MCF 10A (cell line): ENCODE measurements at regions of chr15 and their contacts with region 1.

Region 1: GRCh38 chr15:85504749-85505676 is 124.6 kb downstream of the AKAP13 start:
- DNase-seq: peak; percentile 73
- H3K4me3 Mint-ChIP-seq: no peak overlapping the region
- H3K27ac Mint-ChIP-seq: peak overlapping the region; percentile 61
- H3K4me1 Mint-ChIP-seq: peaks cover 26% of the 10 kb centered on the region
- H3K27me3 Mint-ChIP-seq: no peaks in the 10 kb centered on the region
- CTCF ChIP-seq: peak; percentile 45

Region 2: GRCh38 chr15:85312486-85312885 is 192.5 kb before region 1 on chr15:
- CTCF ChIA-PET with region 1: interaction called, 11 read pairs
- POLR2A ChIA-PET with region 1: no interaction called
- intact Hi-C with region 1: no loop called
- DNase-seq: no peak
- H3K4me3 Mint-ChIP-seq: no peak overlapping the region
- H3K27ac Mint-ChIP-seq: no peak overlapping the region
- H3K4me1 Mint-ChIP-seq: peaks cover 13% of the 10 kb centered on the region
- H3K27me3 Mint-ChIP-seq: no peaks in the 10 kb centered on the region
- CTCF ChIP-seq: no peak

Region 3: DNA sequence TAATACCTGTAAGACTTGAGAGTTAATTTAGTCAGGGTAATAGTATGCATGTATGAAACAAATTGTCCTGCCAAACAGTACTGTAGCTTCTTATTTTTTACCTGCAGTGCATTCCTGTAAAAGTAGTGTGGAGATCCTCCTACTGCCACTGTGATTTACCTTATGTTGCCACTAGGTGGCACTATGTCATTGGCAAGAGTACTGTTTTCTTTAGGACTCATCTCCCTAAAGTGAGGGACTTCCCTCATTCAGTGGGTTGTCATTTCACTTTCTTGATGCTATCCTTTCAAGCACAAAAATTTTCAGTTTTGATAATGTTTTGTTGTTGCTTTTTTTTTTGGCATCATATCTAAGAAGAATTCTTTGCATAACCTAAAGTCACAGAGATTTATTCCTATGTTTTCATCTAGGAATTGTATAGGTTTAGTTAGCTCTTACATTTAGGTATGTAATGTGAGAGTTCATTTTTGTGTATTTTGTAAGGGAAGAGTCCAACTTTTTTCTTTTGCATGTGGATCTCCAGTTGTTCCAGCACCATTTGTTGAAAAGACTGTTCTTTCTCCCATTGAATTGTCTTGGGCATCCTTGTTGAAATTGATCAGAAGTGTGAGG is 19.0 kb before region 1 on chr15:
- CTCF ChIA-PET with region 1: interaction called, 64 read pairs
- POLR2A ChIA-PET with region 1: interaction called, 3 read pairs
- intact Hi-C with region 1: no loop called
- DNase-seq: peak; percentile 83
- H3K4me3 Mint-ChIP-seq: no peak overlapping the region
- H3K27ac Mint-ChIP-seq: no peak overlapping the region
- H3K4me1 Mint-ChIP-seq: peaks cover 37% of the 10 kb centered on the region
- H3K27me3 Mint-ChIP-seq: no peaks in the 10 kb centered on the region
- CTCF ChIP-seq: peak; percentile 62

Region 4: GRCh38 chr15:85527895-85528294 is 22.9 kb after region 1 on chr15:
- CTCF ChIA-PET with region 1: interaction called, 11 read pairs
- POLR2A ChIA-PET with region 1: interaction called, 3 read pairs
- intact Hi-C with region 1: no loop called
- DNase-seq: no peak
- H3K4me3 Mint-ChIP-seq: no peak overlapping the region
- H3K27ac Mint-ChIP-seq: no peak overlapping the region
- H3K4me1 Mint-ChIP-seq: peaks cover 13% of the 10 kb centered on the region
- H3K27me3 Mint-ChIP-seq: no peaks in the 10 kb centered on the region
- CTCF ChIP-seq: no peak